Activated naive CD4-positive, alpha-beta T cell treated with anti-CD3 and anti-CD28 coated beads for 36 hours (primary cell): ENCODE measurements at regions of chr11 and their contacts with region 1.

Region 1: GRCh38 chr11:34234086-34234740 is 123.6 kb downstream of the ABTB2 start:
- DNase-seq: peak; percentile 93
- H3K4me3 Mint-ChIP-seq: no peak overlapping the region
- H3K27ac Mint-ChIP-seq: peak overlapping the region; percentile 83
- H3K4me1 Mint-ChIP-seq: peaks cover 57% of the 10 kb centered on the region
- H3K27me3 Mint-ChIP-seq: no peaks in the 10 kb centered on the region

Region 2: GRCh38 chr11:32821517-32821916 is 1412.7 kb before region 1 on chr11:
- CTCF ChIA-PET with region 1: no interaction called
- intact Hi-C with region 1: loop called (anchors 5 kb)
- DNase-seq: peak; percentile 10
- H3K4me3 Mint-ChIP-seq: no peak overlapping the region
- H3K27ac Mint-ChIP-seq: peak overlapping the region; percentile 4
- H3K4me1 Mint-ChIP-seq: peaks cover 25% of the 10 kb centered on the region
- H3K27me3 Mint-ChIP-seq: no peaks in the 10 kb centered on the region

Region 3: DNA sequence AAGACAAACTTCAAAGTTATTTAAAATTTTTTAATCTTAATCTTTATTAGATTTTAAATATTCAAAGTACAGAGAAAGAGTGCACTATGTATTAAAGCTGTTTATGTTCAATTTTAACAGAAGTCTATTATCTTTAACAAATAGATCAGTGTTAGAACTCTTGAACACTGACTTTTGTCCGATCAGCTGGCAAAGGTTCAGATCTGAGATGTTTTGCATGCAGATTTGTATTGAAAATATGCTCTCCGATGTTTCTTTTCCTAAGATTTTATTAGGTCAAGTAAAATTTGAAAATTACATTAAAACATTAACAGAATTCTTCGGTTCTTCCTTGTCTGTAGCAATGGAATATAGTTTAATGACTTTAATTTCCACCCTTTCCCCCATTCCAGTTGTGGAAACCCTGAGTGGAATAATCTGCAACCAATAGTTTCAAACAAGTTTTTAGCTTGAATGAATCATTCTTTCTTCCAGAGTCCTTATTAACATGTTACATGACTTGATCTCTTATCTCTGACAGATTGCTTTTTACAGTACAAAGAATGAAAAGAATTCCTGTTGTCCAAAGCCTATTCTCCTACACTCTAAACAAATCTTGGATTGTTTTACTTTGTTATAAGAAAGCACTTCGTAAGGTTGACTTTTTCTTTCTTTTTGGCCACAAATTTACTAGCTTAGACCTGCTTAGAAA is 1206.2 kb before region 1 on chr11:
- CTCF ChIA-PET with region 1: no interaction called
- intact Hi-C with region 1: no loop called
- DNase-seq: no peak
- H3K4me3 Mint-ChIP-seq: no peak overlapping the region
- H3K27ac Mint-ChIP-seq: no peak overlapping the region
- H3K4me1 Mint-ChIP-seq: peaks cover 8% of the 10 kb centered on the region
- H3K27me3 Mint-ChIP-seq: no peaks in the 10 kb centered on the region

Region 4: GRCh38 chr11:33942954-33943353 is 291.3 kb before region 1 on chr11:
- CTCF ChIA-PET with region 1: no interaction called
- intact Hi-C with region 1: no loop called
- DNase-seq: peak; percentile 34
- H3K4me3 Mint-ChIP-seq: no peak overlapping the region
- H3K27ac Mint-ChIP-seq: no peak overlapping the region
- H3K4me1 Mint-ChIP-seq: no peaks in the 10 kb centered on the region
- H3K27me3 Mint-ChIP-seq: no peaks in the 10 kb centered on the region

Region 5: DNA sequence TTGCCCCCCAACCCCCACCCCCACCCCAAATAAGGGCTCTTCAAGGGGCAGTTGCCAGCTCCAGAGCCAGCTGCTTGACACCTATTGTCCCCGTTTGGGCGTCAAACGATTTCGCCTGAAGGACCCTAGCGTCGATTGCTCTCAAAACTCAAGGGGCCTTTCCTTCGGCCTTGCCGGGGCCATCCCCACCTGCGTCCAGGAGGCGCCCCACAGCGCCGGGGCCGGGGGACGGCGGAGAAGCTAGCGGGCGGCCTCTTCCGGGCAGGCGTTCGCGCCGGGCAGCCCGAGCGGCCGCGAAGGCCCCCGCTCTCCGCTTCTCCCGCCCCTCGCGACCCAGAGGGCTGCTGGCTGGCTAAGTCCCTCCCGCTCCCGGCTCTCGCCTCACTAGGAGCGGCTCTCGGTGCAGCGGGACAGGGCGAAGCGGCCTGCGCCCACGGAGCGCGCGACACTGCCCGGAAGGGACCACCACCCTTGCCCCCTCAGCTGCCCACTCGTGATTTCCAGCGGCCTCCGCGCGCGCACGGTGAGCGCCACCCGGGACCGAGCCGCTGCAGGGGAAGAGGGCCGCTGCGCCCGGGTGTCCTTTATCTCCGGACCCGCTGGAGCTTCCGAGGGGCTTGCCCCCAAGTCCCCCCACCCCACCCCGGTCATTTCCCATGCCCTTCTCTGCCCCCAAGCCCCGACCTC is 182.7 kb before region 1 on chr11 and contains the start of gene CAPRIN1:
- CTCF ChIA-PET with region 1: no interaction called
- intact Hi-C with region 1: loop called (anchors 1 kb)
- DNase-seq: peak; percentile 86
- H3K4me3 Mint-ChIP-seq: peak within 1 kb of the TSS; percentile 96
- H3K27ac Mint-ChIP-seq: peak within 1 kb of the TSS; percentile 97
- H3K4me1 Mint-ChIP-seq: peaks cover 14% of the 10 kb centered on the region
- H3K27me3 Mint-ChIP-seq: no peaks in the 10 kb centered on the region
- total RNA-seq, gene CAPRIN1: 274 to 289 TPM

Region 6: GRCh38 chr11:34174412-34175041 is 59.7 kb before region 1 on chr11:
- CTCF ChIA-PET with region 1: interaction called, 27 read pairs
- intact Hi-C with region 1: loop called (anchors 1 kb)
- DNase-seq: peak; percentile 88
- H3K4me3 Mint-ChIP-seq: peak overlapping the region; percentile 41
- H3K27ac Mint-ChIP-seq: no peak overlapping the region
- H3K4me1 Mint-ChIP-seq: peaks cover 21% of the 10 kb centered on the region
- H3K27me3 Mint-ChIP-seq: no peaks in the 10 kb centered on the region

Region 7: GRCh38 chr11:34250732-34251639 is 16.8 kb after region 1 on chr11:
- CTCF ChIA-PET with region 1: interaction called, 8 read pairs
- intact Hi-C with region 1: loop called (anchors 1 kb)
- DNase-seq: peak; percentile 84
- H3K4me3 Mint-ChIP-seq: peak overlapping the region; percentile 20
- H3K27ac Mint-ChIP-seq: no peak overlapping the region
- H3K4me1 Mint-ChIP-seq: peaks cover 52% of the 10 kb centered on the region
- H3K27me3 Mint-ChIP-seq: peaks cover 12% of the 10 kb centered on the region

Region 8: GRCh38 chr11:34438529-34439507 is 204.6 kb after region 1 on chr11 and contains the start of gene CAT:
- CTCF ChIA-PET with region 1: no interaction called
- intact Hi-C with region 1: loop called (anchors 1 kb)
- DNase-seq: peak; percentile 99
- H3K4me3 Mint-ChIP-seq: peak within 1 kb of the TSS; percentile 89
- H3K27ac Mint-ChIP-seq: peak within 1 kb of the TSS; percentile 85
- H3K4me1 Mint-ChIP-seq: peaks cover 29% of the 10 kb centered on the region
- H3K27me3 Mint-ChIP-seq: no peaks in the 10 kb centered on the region
- total RNA-seq, gene CAT: 28.3 to 29.1 TPM

Region 9: DNA sequence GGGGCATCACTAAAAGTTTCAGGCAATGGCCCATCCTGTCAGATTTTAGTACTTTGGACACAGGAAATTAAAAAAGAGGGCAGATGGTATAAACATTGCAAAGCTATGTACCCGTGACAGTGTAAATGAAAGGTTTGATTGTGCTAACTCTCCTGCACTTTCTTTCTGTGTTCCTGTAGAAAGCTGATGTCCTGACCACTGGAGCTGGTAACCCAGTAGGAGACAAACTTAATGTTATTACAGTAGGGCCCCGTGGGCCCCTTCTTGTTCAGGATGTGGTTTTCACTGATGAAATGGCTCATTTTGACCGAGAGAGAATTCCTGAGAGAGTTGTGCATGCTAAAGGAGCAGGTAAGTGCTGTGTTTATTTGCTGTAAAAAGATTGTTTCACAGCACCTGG is 214.8 kb after region 1 on chr11:
- CTCF ChIA-PET with region 1: no interaction called
- intact Hi-C with region 1: no loop called
- DNase-seq: peak; percentile 49
- H3K4me3 Mint-ChIP-seq: no peak overlapping the region
- H3K27ac Mint-ChIP-seq: no peak overlapping the region
- H3K4me1 Mint-ChIP-seq: peaks cover 21% of the 10 kb centered on the region
- H3K27me3 Mint-ChIP-seq: no peaks in the 10 kb centered on the region

Region 10: GRCh38 chr11:35082321-35083182 is 848.3 kb after region 1 on chr11:
- CTCF ChIA-PET with region 1: no interaction called
- intact Hi-C with region 1: loop called (anchors 5 kb)
- DNase-seq: peak; percentile 89
- H3K4me3 Mint-ChIP-seq: peak overlapping the region; percentile 66
- H3K27ac Mint-ChIP-seq: peak overlapping the region; percentile 90
- H3K4me1 Mint-ChIP-seq: peaks cover 91% of the 10 kb centered on the region
- H3K27me3 Mint-ChIP-seq: no peaks in the 10 kb centered on the region